ENCODE measurements at regions of chr6 and their contacts with region 1.

Region 1: GRCh38 chr6:71383901-71384489 is 95.4 kb downstream of the OGFRL1 start:
- DNase-seq: peak; percentile 8
- CTCF ChIP-seq: peak; percentile 46

Region 2: DNA sequence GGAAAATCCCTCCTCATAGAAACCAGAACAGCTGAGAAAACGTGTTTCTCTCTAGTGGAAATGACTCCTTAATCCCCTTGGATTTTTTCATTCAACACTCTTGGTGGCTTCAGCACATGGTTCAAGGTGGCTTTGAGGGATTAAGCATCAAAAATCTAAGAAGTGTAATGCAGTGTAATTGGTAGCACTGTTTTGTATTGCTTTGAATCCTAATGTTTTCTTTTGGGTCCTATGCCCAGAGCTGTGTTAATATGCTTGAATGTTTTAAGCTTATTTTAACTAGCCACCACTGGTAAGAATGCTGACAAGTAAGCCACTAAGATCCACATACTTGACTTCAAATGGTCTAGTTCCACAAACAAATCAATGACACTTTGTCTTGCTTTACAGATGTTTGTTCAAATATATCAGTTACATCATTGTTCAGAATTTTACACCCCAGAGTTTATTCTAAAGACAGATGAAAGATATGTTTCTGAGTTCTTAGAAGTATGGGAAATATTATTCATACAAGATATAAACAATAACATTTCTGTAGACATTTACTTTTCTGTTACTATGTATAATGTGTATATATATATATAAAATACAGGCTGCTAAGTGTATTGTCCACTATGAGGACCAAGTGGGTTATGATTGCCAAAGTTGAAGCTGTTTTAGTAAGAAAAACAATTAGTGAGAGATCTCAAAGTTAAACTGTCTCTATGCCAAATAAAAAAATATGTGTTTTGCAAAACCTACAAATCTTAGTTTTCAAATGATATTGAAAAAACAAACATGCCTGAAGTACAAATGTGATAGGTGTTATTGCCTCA is 125.4 kb after region 1 on chr6:
- in situ Hi-C with region 1: loop called (anchors 10 kb)
- DNase-seq: no peak
- CTCF ChIP-seq: no peak

Region 3: DNA sequence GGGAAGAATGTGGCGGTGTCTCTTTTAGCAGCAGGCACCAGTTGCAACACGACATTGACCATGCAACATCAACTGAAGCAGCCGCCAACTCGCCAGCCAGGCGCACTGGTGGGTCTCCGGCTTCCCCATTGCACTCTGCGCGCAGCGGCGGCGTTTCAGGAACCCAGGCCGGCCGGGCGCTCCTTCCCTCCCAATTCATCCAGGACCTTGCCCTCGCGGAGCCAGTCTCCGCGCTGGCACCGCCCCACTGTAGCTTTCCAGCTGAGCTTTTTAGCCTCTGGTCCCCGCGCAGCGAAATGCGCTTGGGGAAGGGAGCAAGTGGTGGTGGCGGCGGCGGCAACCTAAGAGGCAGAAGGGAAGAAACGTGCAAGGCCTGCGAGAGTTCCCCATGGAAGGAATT is 204.5 kb after region 1 on chr6:
- in situ Hi-C with region 1: no loop called
- DNase-seq: no peak
- CTCF ChIP-seq: no peak